RWPE1 (cell line): ENCODE measurements at regions of chrX and their contacts with region 1.

Region 1: GRCh38 chrX:150683536-150684146 is 9.6 kb upstream of the MTMR1 start:
- DNase-seq: peak; percentile 23
- H3K27ac ChIP-seq: no peak overlapping the region
- CTCF ChIP-seq: peak; percentile 52

Region 2: GRCh38 chrX:150715184-150715583 is 31.5 kb after region 1 on chrX:
- CTCF ChIA-PET with region 1: interaction called, 11 read pairs
- POLR2A ChIA-PET with region 1: no interaction called
- DNase-seq: no peak
- H3K27ac ChIP-seq: no peak overlapping the region
- CTCF ChIP-seq: no peak

Region 3: GRCh38 chrX:150942998-150943585 is 259.5 kb after region 1 on chrX:
- CTCF ChIA-PET with region 1: no interaction called
- POLR2A ChIA-PET with region 1: no interaction called
- DNase-seq: no peak
- H3K27ac ChIP-seq: no peak overlapping the region
- CTCF ChIP-seq: no peak

Region 4: DNA sequence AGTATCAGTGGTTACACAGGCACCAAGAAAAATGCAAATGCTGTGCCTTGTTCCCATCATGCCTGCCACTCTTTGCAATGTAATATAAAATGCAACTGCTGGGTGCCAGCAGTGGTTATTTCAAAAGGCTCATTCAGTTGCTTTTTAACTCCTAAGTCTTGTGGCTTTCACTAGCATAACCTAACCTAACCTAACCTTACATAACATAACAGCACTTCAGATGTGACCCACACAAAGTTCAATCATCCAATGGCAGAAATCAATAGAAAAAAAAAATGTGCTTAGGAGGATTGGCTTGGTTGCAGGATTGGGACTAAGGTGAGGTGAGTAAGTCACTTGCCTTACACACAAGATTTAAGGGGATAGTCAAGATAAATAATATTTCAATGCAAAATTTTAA is 653.2 kb after region 1 on chrX:
- CTCF ChIA-PET with region 1: no interaction called
- POLR2A ChIA-PET with region 1: no interaction called
- DNase-seq: no peak
- H3K27ac ChIP-seq: no peak overlapping the region
- CTCF ChIP-seq: no peak